ENCODE measurements at regions of chr2 and their contacts with region 1.

Region 1: DNA sequence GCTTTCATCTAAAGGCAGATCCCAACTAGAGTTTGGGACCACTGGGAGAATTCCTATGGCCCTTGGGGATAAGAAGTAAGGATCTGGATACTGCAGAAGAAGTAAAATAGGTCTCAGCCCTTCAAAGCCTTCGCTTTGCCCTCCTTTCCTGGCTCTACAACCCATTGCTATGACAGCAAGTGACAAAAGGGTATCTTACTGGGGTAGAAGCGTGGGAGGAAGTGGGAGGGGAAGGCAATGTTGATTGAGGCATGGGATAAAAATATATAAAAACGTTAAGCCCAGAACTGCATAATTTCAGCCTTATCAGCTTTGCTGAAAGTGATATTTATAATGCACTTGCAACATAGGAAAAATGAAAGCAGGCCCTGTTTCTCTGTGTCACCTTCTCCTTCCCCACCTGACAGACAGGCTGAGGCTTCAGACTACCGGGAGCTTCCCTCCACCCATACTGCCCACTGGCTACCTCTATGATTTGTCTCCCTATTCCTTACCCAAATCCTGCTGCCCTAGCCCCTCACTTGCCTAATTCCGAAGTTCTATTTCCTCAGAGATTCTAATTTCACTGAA is 14.9 kb upstream of the SOS1 start:
- DNase-seq: peak; percentile 24
- H3K4me3 Mint-ChIP-seq: peak overlapping the region; percentile 21
- H3K27ac Mint-ChIP-seq: peak overlapping the region; percentile 92
- H3K4me1 Mint-ChIP-seq: peaks cover 83% of the 10 kb centered on the region
- H3K27me3 Mint-ChIP-seq: no peaks in the 10 kb centered on the region

Region 2: GRCh38 chr2:39124000-39124745 is 11.6 kb before region 1 on chr2:
- CTCF ChIA-PET with region 1: interaction called, 11 read pairs
- POLR2A ChIA-PET with region 1: no interaction called
- DNase-seq: peak; percentile 97
- H3K4me3 Mint-ChIP-seq: peak overlapping the region; percentile 95
- H3K27ac Mint-ChIP-seq: peak overlapping the region; percentile 97
- H3K4me1 Mint-ChIP-seq: peaks cover 59% of the 10 kb centered on the region
- H3K27me3 Mint-ChIP-seq: no peaks in the 10 kb centered on the region

Measured in activated CD4-positive, alpha-beta T cell treated with anti-CD3 and anti-CD28 coated beads, Interleukin-2, amount 10 ng/mL, durations not matched to agents 7 days and 5 days (primary cell).